OCI-LY7 (cell line): ENCODE measurements at regions of chr6 and their contacts with region 1.

Region 1: GRCh38 chr6:107657755-107658461 is 166.2 kb downstream of the SCML4 start:
- DNase-seq: peak; percentile 99
- H3K4me3 ChIP-seq: peak overlapping the region; percentile 74
- H3K27ac ChIP-seq: peak overlapping the region; percentile 98
- H3K4me1 ChIP-seq: peaks cover 70% of the 10 kb centered on the region
- CTCF ChIP-seq: no peak

Region 2: GRCh38 chr6:107284805-107285204 is 373.1 kb before region 1 on chr6:
- CTCF ChIA-PET with region 1: no interaction called
- POLR2A ChIA-PET with region 1: no interaction called
- intact Hi-C with region 1: no loop called
- DNase-seq: no peak
- H3K4me3 ChIP-seq: no peak overlapping the region
- H3K27ac ChIP-seq: no peak overlapping the region
- H3K4me1 ChIP-seq: no peaks in the 10 kb centered on the region
- CTCF ChIP-seq: no peak

Region 3: GRCh38 chr6:107318100-107318736 is 339.7 kb before region 1 on chr6:
- CTCF ChIA-PET with region 1: interaction called, 8 read pairs
- POLR2A ChIA-PET with region 1: interaction called, 9 read pairs
- intact Hi-C with region 1: loop called (anchors 1 kb)
- DNase-seq: peak; percentile 80
- H3K4me3 ChIP-seq: no peak overlapping the region
- H3K27ac ChIP-seq: no peak overlapping the region
- H3K4me1 ChIP-seq: peaks cover 33% of the 10 kb centered on the region
- CTCF ChIP-seq: peak; percentile 98

Region 4: DNA sequence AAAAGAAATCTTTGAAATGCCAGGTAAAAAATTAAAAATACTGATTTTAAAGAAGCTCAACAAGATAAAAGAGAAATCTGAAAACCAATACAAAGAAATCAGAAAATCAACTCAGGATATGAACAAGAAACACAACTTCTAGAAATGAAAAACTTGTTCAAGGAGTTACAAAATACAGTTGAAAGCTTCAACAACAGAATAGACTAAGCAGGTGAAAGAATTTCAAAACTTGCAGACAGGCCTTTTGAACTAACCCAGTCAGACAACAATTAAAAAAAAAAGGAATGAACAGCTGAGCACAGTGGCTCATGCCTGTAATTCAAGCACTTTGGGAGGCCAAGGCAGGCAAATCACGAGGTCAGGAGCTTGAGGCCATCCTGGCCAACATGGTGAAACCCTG is 256.3 kb before region 1 on chr6:
- CTCF ChIA-PET with region 1: no interaction called
- POLR2A ChIA-PET with region 1: no interaction called
- intact Hi-C with region 1: no loop called
- DNase-seq: peak; percentile 24
- H3K4me3 ChIP-seq: no peak overlapping the region
- H3K27ac ChIP-seq: no peak overlapping the region
- H3K4me1 ChIP-seq: no peaks in the 10 kb centered on the region
- CTCF ChIP-seq: no peak

Region 5: DNA sequence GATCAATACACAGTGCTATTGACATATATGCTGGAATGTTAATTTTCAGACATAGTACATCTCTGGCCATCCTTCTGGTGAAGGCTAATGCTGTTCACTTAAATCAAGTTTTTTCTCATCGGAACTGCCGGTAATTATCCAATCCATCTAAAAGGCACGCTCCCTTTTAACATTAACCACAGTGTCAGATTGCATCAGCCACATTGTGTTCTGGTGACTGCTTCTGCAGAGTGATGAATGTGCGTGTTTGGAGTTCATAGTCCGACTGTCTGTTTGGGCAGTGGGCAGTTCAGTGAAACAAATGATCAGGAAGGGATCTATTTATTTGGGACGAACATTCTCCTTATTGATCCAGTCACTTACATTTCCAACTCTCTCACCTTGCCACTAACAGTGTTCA is 118.5 kb before region 1 on chr6:
- CTCF ChIA-PET with region 1: interaction called, 3 read pairs
- POLR2A ChIA-PET with region 1: interaction called, 4 read pairs
- intact Hi-C with region 1: loop called (anchors 2 kb)
- DNase-seq: no peak
- H3K4me3 ChIP-seq: no peak overlapping the region
- H3K27ac ChIP-seq: peak overlapping the region; percentile 98
- H3K4me1 ChIP-seq: peaks cover 62% of the 10 kb centered on the region
- CTCF ChIP-seq: no peak

Region 6: GRCh38 chr6:107618672-107619071 is 39.2 kb before region 1 on chr6:
- CTCF ChIA-PET with region 1: no interaction called
- POLR2A ChIA-PET with region 1: interaction called, 66 read pairs
- intact Hi-C with region 1: loop called (anchors 1 kb)
- DNase-seq: peak; percentile 96
- H3K4me3 ChIP-seq: peak overlapping the region; percentile 56
- H3K27ac ChIP-seq: peak overlapping the region; percentile 98
- H3K4me1 ChIP-seq: peaks cover 94% of the 10 kb centered on the region
- CTCF ChIP-seq: no peak